ENCODE measurements at regions of chr7 and their contacts with region 1.

Region 1: DNA sequence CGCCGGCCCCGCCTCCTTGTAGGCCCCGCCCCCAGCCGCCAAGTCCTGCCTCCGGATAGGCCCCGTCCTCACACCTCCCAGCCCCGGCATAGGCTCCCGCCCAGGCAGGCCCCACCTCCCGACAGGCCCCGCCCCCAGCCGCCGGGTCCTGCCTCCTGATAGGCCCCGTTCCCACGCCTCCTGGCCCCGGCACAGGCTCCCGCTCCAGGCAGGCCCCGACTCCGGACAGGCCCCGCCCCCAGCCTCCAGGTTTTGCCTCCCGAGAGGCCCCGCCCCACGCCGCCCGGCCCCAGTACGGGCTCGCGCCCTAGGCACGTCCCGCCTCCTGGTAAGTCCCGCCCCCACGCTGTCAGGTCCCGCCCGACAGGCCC is 237 bp upstream of the MICALL2 start:
- DNase-seq: peak; percentile 95 to 99 (median 98)
- ATAC-seq: peak; percentile 96
- H3K4me3 ChIP-seq: peak overlapping the region; percentile 60
- H3K4me3 Mint-ChIP-seq: peak overlapping the region; percentile 72
- H3K27ac ChIP-seq: no peak overlapping the region
- H3K27ac Mint-ChIP-seq: no peak overlapping the region
- H3K4me1 ChIP-seq: peaks cover 33% of the 10 kb centered on the region
- H3K4me1 Mint-ChIP-seq: peaks cover 8% of the 10 kb centered on the region
- H3K27me3 ChIP-seq: no peaks in the 10 kb centered on the region
- H3K27me3 Mint-ChIP-seq: no peaks in the 10 kb centered on the region
- CTCF ChIP-seq: no peak

Region 2: DNA sequence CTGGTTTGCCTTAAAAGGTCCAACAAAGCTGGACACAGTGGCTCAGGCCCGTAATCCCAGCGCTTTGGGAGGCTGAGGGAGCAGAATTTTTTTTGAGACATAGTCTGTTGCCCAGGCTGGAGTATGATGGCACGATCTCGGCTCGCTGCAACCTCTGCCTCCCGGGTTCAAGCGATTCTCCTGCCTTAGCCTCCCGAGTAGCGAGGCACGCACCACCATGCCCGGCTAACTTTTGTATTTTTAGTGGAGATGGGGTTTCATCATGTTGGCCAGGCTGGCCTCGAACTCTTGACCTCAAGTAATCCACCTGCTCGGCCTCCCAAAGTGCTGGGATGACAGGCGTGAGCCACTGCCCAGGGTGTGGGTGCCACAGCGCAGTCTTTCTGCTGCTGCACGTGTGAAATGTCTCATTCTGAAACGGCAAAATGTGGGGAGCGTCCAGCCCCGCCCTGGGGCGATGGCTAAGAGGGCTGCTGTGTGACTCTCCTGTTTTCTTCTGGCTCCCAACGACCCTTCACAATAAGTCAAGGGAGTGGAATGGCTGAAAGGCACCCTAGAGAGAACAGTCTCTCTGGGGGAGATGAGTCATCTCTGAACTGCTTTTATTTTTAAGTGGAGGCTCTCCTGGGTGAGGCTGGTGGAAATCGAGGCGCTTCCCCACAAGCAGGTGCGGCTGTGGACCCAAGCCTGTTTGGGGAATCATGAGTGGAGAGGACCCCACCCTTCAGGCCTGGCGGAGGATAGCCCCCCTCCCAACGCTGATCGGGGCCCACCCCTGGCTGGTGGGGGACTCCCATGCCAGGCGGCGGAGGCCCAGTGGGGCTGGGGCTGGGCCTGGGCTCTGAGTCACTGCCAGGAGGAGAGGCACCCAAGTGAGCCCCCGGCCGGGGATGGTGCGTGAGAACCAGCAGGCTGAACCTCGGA is 523.1 kb before region 1 on chr7:
- CTCF ChIA-PET with region 1: no interaction called
- POLR2A ChIA-PET with region 1: no interaction called
- intact Hi-C with region 1: no loop called
- DNase-seq: no peak
- ATAC-seq: peak; percentile 41
- H3K4me3 ChIP-seq: no peak overlapping the region
- H3K4me3 Mint-ChIP-seq: no peak overlapping the region
- H3K27ac ChIP-seq: no peak overlapping the region
- H3K27ac Mint-ChIP-seq: no peak overlapping the region
- H3K4me1 ChIP-seq: peaks cover 8% of the 10 kb centered on the region
- H3K4me1 Mint-ChIP-seq: no peaks in the 10 kb centered on the region
- H3K27me3 ChIP-seq: no peaks in the 10 kb centered on the region
- H3K27me3 Mint-ChIP-seq: peaks cover 5% of the 10 kb centered on the region
- CTCF ChIP-seq: no peak

Region 3: DNA sequence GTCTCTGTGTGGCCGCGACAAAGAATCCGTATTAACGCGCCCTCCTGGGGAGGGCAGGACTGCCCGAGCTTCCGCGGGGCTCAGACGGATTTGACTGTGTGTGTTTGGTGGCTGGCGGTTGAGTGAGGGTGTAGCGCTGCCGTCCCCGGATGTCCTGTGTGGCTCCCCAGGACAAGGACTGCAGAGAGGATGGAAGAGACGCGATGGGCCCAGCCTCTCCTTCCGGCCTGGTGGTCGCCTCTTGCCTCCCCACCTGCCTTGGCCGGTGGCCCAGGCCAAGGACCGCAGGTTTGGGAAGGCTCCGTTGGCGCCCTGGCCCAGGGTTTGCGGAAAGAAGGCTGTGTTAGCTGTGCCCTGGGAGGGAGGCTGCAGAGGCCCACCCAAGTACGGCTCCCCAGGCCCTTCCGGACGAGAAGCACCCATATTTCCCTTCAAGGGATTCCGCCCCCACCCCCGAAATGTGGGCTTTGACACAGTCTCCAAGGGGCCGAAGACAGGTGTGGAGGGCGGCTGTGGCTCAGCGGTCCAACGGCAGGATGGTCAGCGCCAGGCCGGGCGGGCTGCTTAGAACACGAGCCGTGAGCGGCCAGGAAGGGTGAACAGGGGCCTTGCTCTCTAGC is 224.5 kb before region 1 on chr7:
- CTCF ChIA-PET with region 1: no interaction called
- POLR2A ChIA-PET with region 1: no interaction called
- intact Hi-C with region 1: no loop called
- DNase-seq: peak in 2 of 14 experiments; percentile 24 to 38
- ATAC-seq: no peak
- H3K4me3 ChIP-seq: no peak overlapping the region
- H3K4me3 Mint-ChIP-seq: peak overlapping the region; percentile 43
- H3K27ac ChIP-seq: no peak overlapping the region
- H3K27ac Mint-ChIP-seq: peak overlapping the region; percentile 61
- H3K4me1 ChIP-seq: peaks cover 48% of the 10 kb centered on the region
- H3K4me1 Mint-ChIP-seq: peaks cover 33% of the 10 kb centered on the region
- H3K27me3 ChIP-seq: peaks cover 70 to 78% of the 10 kb centered on the region in 2 experiments
- H3K27me3 Mint-ChIP-seq: peaks cover 68% of the 10 kb centered on the region
- CTCF ChIP-seq: no peak

Region 4: GRCh38 chr7:1412322-1413261 is 46.9 kb before region 1 on chr7:
- CTCF ChIA-PET with region 1: interaction called, 3 read pairs
- POLR2A ChIA-PET with region 1: no interaction called
- intact Hi-C with region 1: loop called in 1 of 2 experiments (anchors 1 kb)
- DNase-seq: peak; percentile 85 to 94 (median 89)
- ATAC-seq: peak; percentile 83
- H3K4me3 ChIP-seq: peak overlapping the region; percentile 26
- H3K4me3 Mint-ChIP-seq: peak overlapping the region; percentile 6
- H3K27ac ChIP-seq: no peak overlapping the region
- H3K27ac Mint-ChIP-seq: no peak overlapping the region
- H3K4me1 ChIP-seq: peaks cover 22% of the 10 kb centered on the region
- H3K4me1 Mint-ChIP-seq: peaks cover 8% of the 10 kb centered on the region
- H3K27me3 ChIP-seq: peaks cover 0 to 3% of the 10 kb centered on the region in 2 experiments
- H3K27me3 Mint-ChIP-seq: peaks cover 19% of the 10 kb centered on the region
- CTCF ChIP-seq: peak; percentile 75

Region 5: GRCh38 chr7:1473864-1474512 is 14.5 kb after region 1 on chr7:
- CTCF ChIA-PET with region 1: interaction called, 6 read pairs
- POLR2A ChIA-PET with region 1: interaction called, 4 read pairs
- intact Hi-C with region 1: loop called (anchors 2 kb)
- DNase-seq: peak; percentile 82 to 94 (median 86)
- ATAC-seq: peak; percentile 97
- H3K4me3 ChIP-seq: no peak overlapping the region
- H3K4me3 Mint-ChIP-seq: no peak overlapping the region
- H3K27ac ChIP-seq: no peak overlapping the region
- H3K27ac Mint-ChIP-seq: no peak overlapping the region
- H3K4me1 ChIP-seq: peaks cover 18% of the 10 kb centered on the region
- H3K4me1 Mint-ChIP-seq: peaks cover 16% of the 10 kb centered on the region
- H3K27me3 ChIP-seq: no peaks in the 10 kb centered on the region
- H3K27me3 Mint-ChIP-seq: no peaks in the 10 kb centered on the region
- CTCF ChIP-seq: peak; percentile 90

Region 6: DNA sequence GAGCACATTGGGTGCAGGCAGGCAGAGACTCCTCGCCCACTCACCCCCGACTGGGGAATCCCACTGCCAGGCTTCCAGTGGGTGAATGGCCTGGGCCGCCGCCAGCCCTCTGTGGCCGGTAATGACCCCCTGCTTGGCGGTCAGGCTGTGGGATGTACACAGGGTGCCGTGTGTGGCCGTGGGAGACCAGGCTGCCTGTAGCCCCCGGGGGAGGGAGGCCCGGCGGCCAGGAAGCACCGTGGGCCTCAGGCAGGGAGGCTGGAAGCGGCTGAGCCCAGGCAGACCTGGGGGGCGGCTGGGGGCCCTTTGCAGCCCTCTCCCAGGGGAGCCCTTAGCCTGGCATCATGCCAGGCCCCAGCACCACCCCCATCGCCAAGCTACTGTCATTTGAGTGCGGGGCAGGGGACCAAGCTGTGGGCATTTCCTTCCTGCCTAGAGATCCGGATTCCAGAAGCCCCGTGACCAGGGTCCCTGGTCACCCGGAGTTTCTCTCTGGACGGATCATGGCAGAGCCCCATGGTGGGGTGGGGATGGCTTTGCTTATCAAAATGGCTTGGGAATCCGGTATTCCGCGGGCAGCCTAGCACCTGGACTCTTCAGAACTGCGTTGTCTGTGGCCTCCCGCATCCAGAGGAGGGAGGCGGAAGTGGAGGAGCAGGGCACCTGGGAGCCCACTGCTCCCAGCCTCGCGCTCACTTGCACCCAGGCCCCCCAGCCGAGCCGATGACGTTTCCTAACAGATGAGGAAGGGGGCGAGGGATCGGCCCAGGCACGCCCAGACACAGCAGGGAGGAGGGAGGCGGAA is 1173.4 kb after region 1 on chr7:
- CTCF ChIA-PET with region 1: no interaction called
- POLR2A ChIA-PET with region 1: no interaction called
- intact Hi-C with region 1: loop called in 1 of 2 experiments (anchors 5 kb)
- DNase-seq: peak in 8 of 14 experiments; percentile 18 to 65 (median 46)
- ATAC-seq: peak; percentile 9
- H3K4me3 ChIP-seq: peak overlapping the region; percentile 85
- H3K4me3 Mint-ChIP-seq: peak overlapping the region; percentile 92
- H3K27ac ChIP-seq: no peak overlapping the region
- H3K27ac Mint-ChIP-seq: peak overlapping the region; percentile 66
- H3K4me1 ChIP-seq: peaks cover 34% of the 10 kb centered on the region
- H3K4me1 Mint-ChIP-seq: peaks cover 20% of the 10 kb centered on the region
- H3K27me3 ChIP-seq: no peaks in the 10 kb centered on the region
- H3K27me3 Mint-ChIP-seq: no peaks in the 10 kb centered on the region
- CTCF ChIP-seq: no peak

Measured in CD4-positive, alpha-beta T cell (primary cell).